ENCODE measurements at regions of chr1 and their contacts with region 1.

Region 1: GRCh38 chr1:152189657-152190442 is 30.8 kb upstream of the RPTN start:
- DNase-seq: peak; percentile 44 to 57
- ATAC-seq: peak in 2 of 4 donors; percentile 72 to 76
- H3K4me3 ChIP-seq: peak overlapping the region; percentile 57
- H3K27ac ChIP-seq: no peak overlapping the region
- H3K4me1 ChIP-seq: no peaks in the 10 kb centered on the region
- H3K27me3 ChIP-seq: peaks cover 0 to 19% (median 3%) of the 10 kb centered on the region in 3 donors
- CTCF ChIP-seq: peak; percentile 55

Region 2: DNA sequence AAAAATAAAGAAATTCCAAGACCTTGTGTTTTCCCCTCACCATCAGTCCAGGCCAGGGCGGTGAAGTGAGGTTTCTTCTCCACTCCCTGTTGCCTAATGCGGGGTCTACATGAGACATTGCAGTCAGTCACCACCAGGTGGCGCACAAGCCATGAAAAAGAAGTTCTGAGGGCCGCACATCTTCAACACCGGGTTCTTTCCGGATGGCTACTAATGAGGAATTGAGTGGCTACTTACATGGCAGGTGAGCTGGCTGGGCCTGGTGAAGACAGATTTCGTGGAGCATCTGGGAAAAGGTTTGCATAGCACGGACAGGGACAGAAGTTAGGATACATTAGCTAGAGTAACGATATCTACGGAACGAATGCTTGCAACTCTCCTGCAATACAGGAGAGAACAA is 137.2 kb before region 1 on chr1:
- intact Hi-C with region 1: loop called in 1 of 2 experiments (anchors 5 kb)
- DNase-seq: peak; percentile 85 to 90
- ATAC-seq: peak; percentile 63 to 77 (median 67)
- H3K4me3 ChIP-seq: no peak overlapping the region
- H3K27ac ChIP-seq: no peak overlapping the region
- H3K4me1 ChIP-seq: no peaks in the 10 kb centered on the region
- H3K27me3 ChIP-seq: peaks cover 0 to 3% (median 0%) of the 10 kb centered on the region in 3 donors
- CTCF ChIP-seq: peak; percentile 88

Region 3: DNA sequence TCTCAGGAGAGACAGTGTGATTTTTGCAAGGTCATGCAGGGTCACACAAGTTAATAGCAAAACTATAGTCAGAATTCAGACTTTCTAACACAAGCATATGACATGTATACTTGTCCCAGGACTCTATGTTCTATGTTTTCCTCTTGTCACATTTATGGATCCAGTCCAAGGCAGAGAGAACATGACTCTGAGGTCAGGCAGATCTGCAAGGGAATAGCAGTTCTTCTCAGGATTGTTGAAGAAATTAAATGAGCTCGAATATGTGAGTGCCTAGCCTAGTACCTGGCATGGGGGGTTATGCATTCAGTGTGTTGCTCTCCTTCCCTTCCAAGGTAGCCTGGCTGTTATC is 21.4 kb before region 1 on chr1:
- intact Hi-C with region 1: no loop called
- DNase-seq: no peak
- ATAC-seq: no peak
- H3K4me3 ChIP-seq: no peak overlapping the region
- H3K27ac ChIP-seq: no peak overlapping the region
- H3K4me1 ChIP-seq: no peaks in the 10 kb centered on the region
- H3K27me3 ChIP-seq: peaks cover 0 to 2% (median 0%) of the 10 kb centered on the region in 3 donors
- CTCF ChIP-seq: no peak

Region 4: DNA sequence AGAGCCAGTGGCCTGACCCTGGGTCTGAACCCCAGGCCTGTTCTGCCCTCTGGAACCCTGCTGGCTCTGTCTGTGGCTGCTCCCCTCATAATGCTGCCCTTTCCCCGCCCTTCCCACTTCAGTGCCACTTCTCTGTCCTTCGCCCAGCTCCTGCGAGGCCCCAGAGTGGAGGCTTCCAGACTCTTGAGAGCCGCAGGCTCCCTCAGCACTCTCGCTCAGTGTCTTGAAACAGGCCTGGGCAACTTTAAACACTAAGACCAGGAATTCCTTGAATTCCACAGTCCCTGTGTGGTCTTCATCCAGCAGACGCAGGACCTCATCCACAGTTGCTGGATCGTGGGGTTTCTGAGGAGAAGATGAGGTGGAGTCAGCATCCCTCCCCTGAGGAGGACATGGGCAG is 220.7 kb after region 1 on chr1:
- intact Hi-C with region 1: no loop called
- DNase-seq: no peak
- ATAC-seq: no peak
- H3K4me3 ChIP-seq: no peak overlapping the region
- H3K27ac ChIP-seq: no peak overlapping the region
- H3K4me1 ChIP-seq: no peaks in the 10 kb centered on the region
- H3K27me3 ChIP-seq: no peaks in the 10 kb centered on the region
- CTCF ChIP-seq: no peak

Region 5: DNA sequence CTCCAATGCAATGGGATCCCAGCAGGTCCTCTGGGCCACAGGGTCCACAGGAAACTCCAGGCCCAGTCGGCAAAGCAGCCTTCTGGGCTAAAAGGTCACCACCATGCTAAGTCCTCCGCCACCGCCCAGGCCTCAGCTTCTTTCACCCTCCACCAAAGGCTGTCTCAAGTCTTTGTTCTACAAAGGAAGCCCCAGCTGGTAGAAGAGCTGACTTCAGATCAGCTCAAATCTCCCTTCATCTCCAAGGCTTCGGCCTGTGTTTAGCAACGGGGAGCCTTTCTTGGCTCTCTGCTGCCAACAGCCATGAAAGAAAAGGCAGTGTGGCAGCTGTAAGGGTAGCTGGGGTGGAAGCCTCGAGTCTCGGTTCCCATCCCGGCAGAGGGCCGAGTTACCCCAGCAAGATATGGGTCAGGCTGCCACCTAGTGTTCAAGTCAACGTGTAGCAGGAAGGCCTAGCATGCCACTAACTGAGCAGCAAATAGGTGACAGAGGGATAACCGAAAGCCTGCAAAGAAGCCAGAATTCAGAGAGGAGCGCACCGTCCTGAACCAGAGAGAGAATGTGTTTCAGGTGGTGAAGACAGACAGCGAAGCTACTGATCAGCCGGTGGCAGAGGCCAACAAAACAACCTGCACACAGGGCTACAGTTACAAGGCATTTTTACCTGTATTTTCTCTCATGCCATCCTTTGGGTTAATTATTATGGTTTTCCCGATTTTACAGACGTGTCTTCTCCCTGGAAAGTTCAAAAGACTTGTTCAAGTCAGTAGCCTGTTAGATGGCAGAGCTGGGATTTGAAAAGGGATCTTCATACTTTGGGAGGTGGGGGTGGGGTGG is 251.0 kb after region 1 on chr1:
- intact Hi-C with region 1: loop called in 1 of 2 experiments (anchors 5 kb)
- DNase-seq: peak; percentile 51 to 75
- ATAC-seq: peak; percentile 63 to 81 (median 74)
- H3K4me3 ChIP-seq: no peak overlapping the region
- H3K27ac ChIP-seq: no peak overlapping the region
- H3K4me1 ChIP-seq: no peaks in the 10 kb centered on the region
- H3K27me3 ChIP-seq: peaks cover 0 to 3% (median 0%) of the 10 kb centered on the region in 3 donors
- CTCF ChIP-seq: peak; percentile 60

Region 6: GRCh38 chr1:152448095-152448494 is 258.2 kb after region 1 on chr1:
- intact Hi-C with region 1: loop called in 1 of 2 experiments (anchors 2 kb)
- DNase-seq: no peak
- ATAC-seq: no peak
- H3K4me3 ChIP-seq: no peak overlapping the region
- H3K27ac ChIP-seq: no peak overlapping the region
- H3K4me1 ChIP-seq: no peaks in the 10 kb centered on the region
- H3K27me3 ChIP-seq: peaks cover 0 to 3% (median 0%) of the 10 kb centered on the region in 3 donors
- CTCF ChIP-seq: no peak

Region 7: GRCh38 chr1:152459596-152460528 is 270.0 kb after region 1 on chr1:
- intact Hi-C with region 1: loop called in 1 of 2 experiments (anchors 5 kb)
- DNase-seq: peak; percentile 70 to 78
- ATAC-seq: peak in 3 of 4 donors; percentile 37 to 59 (median 50)
- H3K4me3 ChIP-seq: peak overlapping the region; percentile 2
- H3K27ac ChIP-seq: no peak overlapping the region
- H3K4me1 ChIP-seq: no peaks in the 10 kb centered on the region
- H3K27me3 ChIP-seq: no peaks in the 10 kb centered on the region
- CTCF ChIP-seq: peak; percentile 59

Measured in psoas muscle (tissue), 8 donors.